Dendritic cell treated with granulocyte-macrophage colony-stimulating factor and Interleukin-4, amounts not matched to agents 40 ng/mL and 50 ng/mL, for 4 days (primary cell): ENCODE measurements at regions of chr5 and their contacts with region 1.

Region 1: GRCh38 chr5:124927735-124928134 is 181.3 kb upstream of the ZNF608 start:
- H3K4me3 Mint-ChIP-seq: no peak overlapping the region
- H3K27ac Mint-ChIP-seq: no peak overlapping the region
- H3K4me1 Mint-ChIP-seq: peaks cover 33% of the 10 kb centered on the region
- H3K27me3 Mint-ChIP-seq: peaks cover 2% of the 10 kb centered on the region

Region 2: DNA sequence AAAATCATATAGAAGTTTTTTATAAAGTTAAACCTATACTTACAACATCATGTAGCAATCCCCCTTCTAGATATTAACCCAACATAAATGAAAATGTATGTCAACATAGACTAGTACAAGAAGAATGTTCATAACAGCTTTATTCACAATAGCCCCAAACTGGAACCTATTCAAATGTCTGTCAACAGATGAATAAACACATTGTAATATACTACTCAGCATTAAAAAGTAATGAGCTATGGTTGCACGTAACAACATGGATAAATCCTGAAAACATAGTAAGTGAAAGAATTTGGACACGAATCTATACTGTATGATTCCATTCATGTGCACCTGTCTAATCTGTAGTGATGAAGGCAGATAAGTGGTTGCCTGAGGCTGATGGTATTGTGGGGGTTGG is 1341.9 kb before region 1 on chr5:
- intact Hi-C with region 1: no loop called
- H3K4me3 Mint-ChIP-seq: no peak overlapping the region
- H3K27ac Mint-ChIP-seq: no peak overlapping the region
- H3K4me1 Mint-ChIP-seq: no peaks in the 10 kb centered on the region
- H3K27me3 Mint-ChIP-seq: no peaks in the 10 kb centered on the region

Region 3: DNA sequence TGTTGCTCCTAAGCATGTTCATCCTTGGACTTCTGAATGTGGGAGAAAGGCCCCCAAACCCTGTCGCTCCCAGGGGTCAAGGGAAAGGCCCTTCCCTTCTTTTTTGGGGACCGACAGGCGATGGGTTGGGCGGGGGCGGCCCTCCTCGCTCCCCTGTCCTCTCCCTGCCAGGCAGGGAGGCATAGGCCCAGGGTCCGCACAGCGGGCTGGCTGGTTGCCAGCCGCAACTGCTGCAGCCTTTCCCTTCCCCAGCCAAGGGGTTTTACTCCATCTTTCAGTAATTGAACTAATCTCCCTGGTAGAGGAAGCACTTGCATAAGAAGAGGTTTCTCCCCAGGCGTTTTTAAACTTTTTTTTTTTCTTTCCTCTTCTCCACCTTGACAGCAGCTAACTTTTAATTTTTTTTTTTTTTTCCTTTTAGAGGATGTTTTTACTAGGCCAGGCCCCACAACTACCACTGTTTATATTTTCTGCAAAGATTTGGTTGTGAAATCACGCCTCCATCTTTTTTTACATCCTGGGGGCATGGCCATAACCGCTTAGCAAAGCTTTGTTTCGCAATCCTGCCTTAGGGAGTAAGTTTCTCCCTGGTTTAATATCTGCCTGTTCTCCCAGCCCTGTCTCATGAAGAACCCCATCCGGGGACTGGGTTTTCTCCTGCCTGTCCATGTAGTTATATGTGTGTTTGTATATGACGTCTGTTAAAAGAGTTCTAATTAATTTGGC is 35.7 kb after region 1 on chr5:
- intact Hi-C with region 1: loop called (anchors 5 kb)
- H3K4me3 Mint-ChIP-seq: peak overlapping the region; percentile 24
- H3K27ac Mint-ChIP-seq: peak overlapping the region; percentile 49
- H3K4me1 Mint-ChIP-seq: peaks cover 27% of the 10 kb centered on the region
- H3K27me3 Mint-ChIP-seq: peaks cover 3% of the 10 kb centered on the region

Region 4: GRCh38 chr5:125286271-125286670 is 358.5 kb after region 1 on chr5:
- intact Hi-C with region 1: no loop called
- H3K4me3 Mint-ChIP-seq: no peak overlapping the region
- H3K27ac Mint-ChIP-seq: no peak overlapping the region
- H3K4me1 Mint-ChIP-seq: no peaks in the 10 kb centered on the region
- H3K27me3 Mint-ChIP-seq: no peaks in the 10 kb centered on the region